Caco-2 (cell line): ENCODE measurements at regions of chr3 and their contacts with region 1.

Region 1: DNA sequence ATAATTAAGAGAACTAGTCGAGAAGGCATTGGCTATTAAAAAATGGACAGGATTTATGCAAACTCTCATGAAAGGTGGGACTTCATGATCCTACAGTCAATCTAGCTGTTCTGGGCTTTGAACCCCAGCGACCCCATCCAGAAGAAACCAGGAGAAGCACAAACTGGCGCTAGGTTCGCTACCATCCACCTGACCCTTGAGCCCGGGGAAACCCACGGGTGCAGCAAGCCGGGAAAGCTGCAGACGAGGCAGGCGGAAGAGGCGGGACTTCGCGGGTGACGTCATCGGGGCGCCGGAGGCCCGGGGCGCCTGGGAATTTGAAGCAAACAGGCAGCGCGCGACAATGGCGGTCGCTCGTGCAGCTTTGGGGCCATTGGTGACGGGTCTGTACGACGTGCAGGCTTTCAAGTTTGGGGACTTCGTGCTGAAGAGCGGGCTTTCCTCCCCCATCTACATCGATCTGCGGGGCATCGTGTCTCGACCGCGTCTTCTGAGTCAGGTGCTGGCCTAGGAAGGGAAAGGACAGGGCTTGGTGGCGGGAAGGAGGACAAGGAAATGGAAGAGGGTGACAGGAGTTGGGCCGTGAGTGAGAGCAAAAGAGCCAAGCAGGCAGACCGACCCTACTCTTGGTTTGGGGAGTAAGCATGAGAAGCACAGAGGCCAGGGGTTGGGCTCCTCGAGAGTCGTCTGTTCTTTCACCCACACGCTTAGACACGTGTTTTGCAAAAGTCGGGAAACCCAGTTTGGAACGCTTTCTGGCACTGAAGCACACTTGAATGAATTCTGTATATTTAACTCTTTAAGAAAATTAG is at the start of gene UMPS:
- DNase-seq: peak; percentile 92 to 95
- H3K4me3 ChIP-seq: peak within 1 kb of the TSS; percentile 86
- H3K4me3 Mint-ChIP-seq: peak within 1 kb of the TSS; percentile 95
- H3K27ac Mint-ChIP-seq: peak within 1 kb of the TSS; percentile 99
- H3K4me1 ChIP-seq: 0 out of 2 replicates have a peak, but pooled peaks cover 7% of the 10 kb centered on the region
- H3K4me1 Mint-ChIP-seq: no peaks in the 10 kb centered on the region
- H3K27me3 ChIP-seq: no peaks in the 10 kb centered on the region
- H3K27me3 Mint-ChIP-seq: no peaks in the 10 kb centered on the region
- CTCF ChIP-seq: no peak
- total RNA-seq, gene UMPS: 59.3 and 62.9 TPM in 2 replicates

Region 2: DNA sequence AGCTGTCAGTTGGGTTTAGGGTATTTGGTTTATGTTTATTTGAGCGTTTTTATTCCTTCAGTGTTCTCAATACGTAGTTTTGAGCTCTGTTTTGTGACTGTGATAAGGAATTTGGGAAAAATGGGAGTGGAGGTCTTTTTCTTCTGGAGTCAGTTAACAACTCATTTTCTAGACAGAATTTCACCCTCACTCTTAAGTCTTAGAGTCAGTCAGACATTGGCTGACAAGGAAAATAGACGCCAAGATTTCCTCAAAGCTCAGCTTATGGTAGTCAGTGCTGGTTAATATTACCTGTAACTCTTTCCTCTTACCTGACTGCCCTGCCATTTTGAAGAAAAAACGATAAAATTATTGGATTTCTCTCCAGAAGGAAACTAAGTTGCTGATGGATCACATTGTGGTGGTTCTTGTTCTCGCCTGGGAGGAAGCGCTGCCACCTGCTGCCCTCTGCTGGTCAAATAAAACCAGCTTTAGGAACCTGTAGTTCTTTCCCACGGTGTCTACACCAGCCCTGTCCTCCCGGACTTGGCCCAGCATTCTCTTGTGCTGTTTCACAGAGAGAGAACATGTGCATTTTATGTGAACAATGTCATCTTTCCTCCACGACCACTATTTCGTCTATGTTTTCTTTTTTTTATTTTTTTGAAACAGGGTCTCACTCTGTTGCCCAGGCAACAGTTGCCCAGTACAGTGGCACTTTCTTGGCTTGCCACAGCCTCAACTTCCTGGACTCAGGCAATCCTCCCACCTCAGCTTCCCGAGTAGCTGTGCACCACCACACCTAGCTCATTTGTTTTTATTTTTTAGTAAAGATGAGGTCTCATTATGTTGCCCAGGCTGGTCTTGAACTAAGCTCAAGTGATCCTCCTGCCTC is 41.5 kb before region 1 on chr3:
- CTCF ChIA-PET with region 1: no interaction called
- POLR2A ChIA-PET with region 1: no interaction called
- intact Hi-C with region 1: loop called (anchors 2 kb)
- DNase-seq: peak; percentile 83 to 84
- H3K4me3 ChIP-seq: no peak overlapping the region
- H3K4me3 Mint-ChIP-seq: peak overlapping the region; percentile 48
- H3K27ac Mint-ChIP-seq: peak overlapping the region; percentile 71
- H3K4me1 ChIP-seq: peaks cover 44% of the 10 kb centered on the region
- H3K4me1 Mint-ChIP-seq: peaks cover 53% of the 10 kb centered on the region
- H3K27me3 ChIP-seq: no peaks in the 10 kb centered on the region
- H3K27me3 Mint-ChIP-seq: no peaks in the 10 kb centered on the region
- CTCF ChIP-seq: peak; percentile 79 to 80

Region 3: DNA sequence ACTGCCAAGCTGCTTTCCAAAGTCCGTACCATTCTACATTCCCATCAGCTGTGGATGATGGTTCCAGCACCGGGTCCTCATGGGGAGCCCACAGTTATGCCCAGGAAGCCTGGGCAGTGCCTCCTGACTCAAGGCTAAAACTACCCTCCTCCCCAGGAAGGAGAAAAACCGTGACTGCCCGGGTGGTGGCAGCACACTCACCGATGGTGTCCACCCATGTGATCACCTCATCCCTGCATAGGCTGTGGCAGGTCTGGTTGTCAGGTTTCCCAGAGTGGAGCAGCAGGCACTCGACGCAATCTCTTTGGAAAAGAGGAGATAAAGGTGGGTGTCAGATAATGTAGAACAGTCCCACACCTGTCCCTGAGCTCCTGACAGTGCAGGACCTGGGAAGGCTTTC is 38.5 kb after region 1 on chr3:
- CTCF ChIA-PET with region 1: no interaction called
- POLR2A ChIA-PET with region 1: no interaction called
- intact Hi-C with region 1: no loop called
- DNase-seq: peak; percentile 55 to 63
- H3K4me3 ChIP-seq: no peak overlapping the region
- H3K4me3 Mint-ChIP-seq: no peak overlapping the region
- H3K27ac Mint-ChIP-seq: no peak overlapping the region
- H3K4me1 ChIP-seq: no peaks in the 10 kb centered on the region
- H3K4me1 Mint-ChIP-seq: no peaks in the 10 kb centered on the region
- H3K27me3 ChIP-seq: no peaks in the 10 kb centered on the region
- H3K27me3 Mint-ChIP-seq: no peaks in the 10 kb centered on the region
- CTCF ChIP-seq: peak; percentile 26 to 57